Activated CD4-positive, alpha-beta T cell treated with anti-CD3 and anti-CD28 coated beads for 36 hours (primary cell): ENCODE measurements at regions of chr4 and their contacts with region 1.

Region 1: DNA sequence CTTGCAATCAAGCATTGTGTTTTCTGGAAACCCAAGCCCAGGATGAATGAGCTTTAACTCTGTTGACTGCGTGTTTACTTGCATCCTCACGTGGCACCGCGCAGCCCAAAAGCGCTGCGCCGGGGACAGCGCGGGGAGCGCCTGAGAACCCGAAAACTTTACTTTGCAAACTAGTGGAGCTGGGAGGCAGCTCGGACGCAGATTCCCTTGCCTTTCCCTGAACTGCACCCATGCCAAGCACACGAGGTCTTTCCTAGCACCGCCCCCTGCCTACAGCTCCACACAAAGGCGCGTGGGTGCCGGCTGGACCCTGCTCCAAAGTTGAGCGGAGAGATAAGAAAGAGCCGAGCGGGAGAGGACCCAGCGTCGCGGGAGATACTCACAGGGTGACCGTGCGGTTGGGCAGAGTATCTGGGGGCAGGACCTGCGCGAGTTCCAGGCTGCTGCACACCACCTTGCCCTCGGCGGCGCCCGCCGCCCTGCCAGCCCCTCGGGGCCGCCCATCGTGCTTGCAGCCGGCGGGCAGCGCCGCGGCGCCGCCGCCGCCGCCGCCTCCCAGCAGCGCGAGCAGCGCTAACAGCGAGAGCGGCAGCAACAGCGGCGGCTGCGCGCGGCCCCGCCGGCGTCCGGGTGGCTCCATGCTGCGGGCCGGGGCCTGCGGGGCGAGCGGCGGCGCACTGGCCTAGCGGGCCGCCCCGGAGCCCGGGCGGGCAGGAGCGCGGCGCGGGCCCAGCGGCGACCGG is 550 bp downstream of the ADGRA3 start:
- DNase-seq: peak; percentile 56
- ATAC-seq: peak; percentile 72
- H3K4me3 Mint-ChIP-seq: peak overlapping the region; percentile 89
- H3K27ac Mint-ChIP-seq: peak overlapping the region; percentile 88
- H3K4me1 Mint-ChIP-seq: peaks cover 13% of the 10 kb centered on the region
- H3K27me3 Mint-ChIP-seq: peaks cover 14% of the 10 kb centered on the region

Region 2: GRCh38 chr4:22539251-22539650 is 23.9 kb after region 1 on chr4:
- CTCF ChIA-PET with region 1: no interaction called
- POLR2A ChIA-PET with region 1: no interaction called
- intact Hi-C with region 1: no loop called
- DNase-seq: no peak
- ATAC-seq: no peak
- H3K4me3 Mint-ChIP-seq: no peak overlapping the region
- H3K27ac Mint-ChIP-seq: no peak overlapping the region
- H3K4me1 Mint-ChIP-seq: no peaks in the 10 kb centered on the region
- H3K27me3 Mint-ChIP-seq: no peaks in the 10 kb centered on the region

Region 3: GRCh38 chr4:22678940-22679854 is 163.9 kb after region 1 on chr4:
- CTCF ChIA-PET with region 1: interaction called, 3 read pairs
- POLR2A ChIA-PET with region 1: no interaction called
- intact Hi-C with region 1: loop called in 1 of 2 experiments (anchors 10 kb)
- DNase-seq: no peak
- ATAC-seq: no peak
- H3K4me3 Mint-ChIP-seq: no peak overlapping the region
- H3K27ac Mint-ChIP-seq: no peak overlapping the region
- H3K4me1 Mint-ChIP-seq: peaks cover 41% of the 10 kb centered on the region
- H3K27me3 Mint-ChIP-seq: no peaks in the 10 kb centered on the region